ENCODE measurements at regions of chr10 and their contacts with region 1.

Region 1: GRCh38 chr10:30727524-30727923 is 98.0 kb upstream of the LYZL2 start:
- DNase-seq: no peak
- H3K4me3 Mint-ChIP-seq: no peak overlapping the region
- H3K27ac Mint-ChIP-seq: no peak overlapping the region
- H3K4me1 Mint-ChIP-seq: peaks cover 10% of the 10 kb centered on the region
- H3K27me3 Mint-ChIP-seq: peaks cover 12% of the 10 kb centered on the region
- CTCF ChIP-seq: no peak

Region 2: GRCh38 chr10:31759799-31760626 is 1032.5 kb after region 1 on chr10:
- CTCF ChIA-PET with region 1: no interaction called
- intact Hi-C with region 1: loop called (anchors 5 kb)
- DNase-seq: peak; percentile 94
- H3K4me3 Mint-ChIP-seq: peak overlapping the region; percentile 84
- H3K27ac Mint-ChIP-seq: peak overlapping the region; percentile 88
- H3K4me1 Mint-ChIP-seq: peaks cover 21% of the 10 kb centered on the region
- H3K27me3 Mint-ChIP-seq: no peaks in the 10 kb centered on the region
- CTCF ChIP-seq: no peak